ENCODE measurements at regions of chr9 and their contacts with region 1.

Region 1: GRCh38 chr9:120755827-120756434 is 37.3 kb downstream of the FBXW2 start:
- DNase-seq: peak in 3 of 6 donors; percentile 32 to 72 (median 42)
- ATAC-seq: peak; percentile 71 to 96 (median 88)
- H3K4me3 ChIP-seq: no peak overlapping the region
- H3K27ac ChIP-seq: no peak overlapping the region
- H3K4me1 ChIP-seq: no peaks in the 10 kb centered on the region
- H3K27me3 ChIP-seq: no peaks in the 10 kb centered on the region
- CTCF ChIP-seq: peak; percentile 76 to 93 (median 88)

Region 2: GRCh38 chr9:120610975-120611689 is 144.8 kb before region 1 on chr9:
- intact Hi-C with region 1: no loop called
- DNase-seq: no peak
- ATAC-seq: no peak
- H3K4me3 ChIP-seq: no peak overlapping the region
- H3K27ac ChIP-seq: no peak overlapping the region
- H3K4me1 ChIP-seq: no peaks in the 10 kb centered on the region
- H3K27me3 ChIP-seq: no peaks in the 10 kb centered on the region
- CTCF ChIP-seq: no peak

Region 3: GRCh38 chr9:120642129-120642770 is 113.7 kb before region 1 on chr9:
- intact Hi-C with region 1: no loop called
- DNase-seq: no peak
- ATAC-seq: no peak
- H3K4me3 ChIP-seq: no peak overlapping the region
- H3K27ac ChIP-seq: no peak overlapping the region
- H3K4me1 ChIP-seq: peaks cover 0 to 16% (median 12%) of the 10 kb centered on the region in 3 donors
- H3K27me3 ChIP-seq: no peaks in the 10 kb centered on the region
- CTCF ChIP-seq: no peak

Region 4: DNA sequence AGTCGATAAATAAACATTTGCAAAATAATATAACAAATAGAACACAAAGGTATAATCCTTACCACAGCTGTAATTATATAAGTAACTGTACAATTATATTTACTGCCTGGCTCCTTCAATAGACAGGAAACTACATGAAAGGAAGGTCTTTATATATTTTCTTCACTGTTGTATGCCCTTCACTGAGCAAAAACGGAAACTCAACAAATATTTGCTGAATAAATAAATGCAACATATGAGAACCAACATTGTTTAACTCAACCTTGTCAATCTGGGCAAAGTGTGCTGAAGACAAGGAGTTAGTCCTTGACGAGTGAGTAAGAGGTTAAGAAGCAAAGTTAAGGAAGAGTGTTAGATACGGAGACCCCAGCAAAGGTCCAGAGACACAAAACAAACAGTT is 64.2 kb after region 1 on chr9:
- intact Hi-C with region 1: no loop called
- DNase-seq: no peak
- ATAC-seq: no peak
- H3K4me3 ChIP-seq: no peak overlapping the region
- H3K27ac ChIP-seq: no peak overlapping the region
- H3K4me1 ChIP-seq: peaks cover 0 to 7% (median 0%) of the 10 kb centered on the region in 3 donors
- H3K27me3 ChIP-seq: no peaks in the 10 kb centered on the region
- CTCF ChIP-seq: no peak

Region 5: DNA sequence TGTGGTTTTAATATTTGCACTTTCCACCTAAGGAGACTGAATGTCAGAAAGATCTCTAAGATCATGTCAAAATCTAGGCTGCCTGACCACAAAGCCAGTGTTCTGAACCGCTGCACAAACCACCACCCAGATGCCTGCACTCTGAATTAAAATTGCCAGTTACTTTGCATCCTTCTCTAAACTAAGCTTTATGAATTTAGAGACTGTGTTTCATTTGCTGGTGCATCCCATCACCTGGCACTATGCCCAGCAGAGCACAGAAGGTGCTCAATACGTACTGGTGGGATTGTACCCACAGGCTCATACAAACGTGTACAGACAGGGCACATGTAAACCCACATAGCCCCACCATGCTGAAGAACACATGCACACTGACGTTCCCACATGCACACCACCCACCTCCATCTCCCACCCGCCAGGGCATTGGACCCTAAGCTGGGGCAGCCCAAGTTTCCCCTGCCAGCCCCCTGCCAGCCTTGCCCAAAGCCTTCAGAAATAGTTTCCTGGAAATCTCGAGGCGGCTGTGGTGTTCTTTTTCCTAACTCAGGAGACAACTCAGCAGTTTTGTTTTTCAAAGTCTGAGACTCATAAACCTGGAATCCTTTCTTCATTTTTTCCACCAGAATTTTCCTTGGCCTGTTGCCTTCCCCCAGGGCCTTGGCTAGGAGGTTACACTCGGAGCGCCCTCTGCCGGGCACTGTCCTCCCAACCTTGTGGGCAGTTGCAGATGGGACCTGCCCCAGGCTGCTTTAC is 180.3 kb after region 1 on chr9:
- intact Hi-C with region 1: loop called in 1 of 3 experiments (anchors 10 kb)
- DNase-seq: peak; percentile 83 to 99 (median 94)
- ATAC-seq: peak; percentile 89 to 95 (median 90)
- H3K4me3 ChIP-seq: no peak overlapping the region
- H3K27ac ChIP-seq: peak overlapping the region in 3 of 4 donors; percentile 53 to 88 (median 84)
- H3K4me1 ChIP-seq: peaks cover 15 to 20% (median 19%) of the 10 kb centered on the region in 3 donors
- H3K27me3 ChIP-seq: no peaks in the 10 kb centered on the region
- CTCF ChIP-seq: peak; percentile 59 to 85 (median 74)

Measured in pancreas (tissue), 10 donors.